ENCODE measurements at regions of chr10 and their contacts with region 1.

Region 1: GRCh38 chr10:80094231-80094630 is 15.8 kb downstream of the TMEM254 start:
- DNase-seq: no peak
- ATAC-seq: no peak
- H3K4me3 ChIP-seq: no peak overlapping the region
- H3K27ac ChIP-seq: no peak overlapping the region
- H3K4me1 ChIP-seq: no peaks in the 10 kb centered on the region
- H3K27me3 ChIP-seq: no peaks in the 10 kb centered on the region
- CTCF ChIP-seq: no peak

Region 2: GRCh38 chr10:78852466-78853240 is 1241.6 kb before region 1 on chr10:
- CTCF ChIA-PET with region 1: no interaction called
- POLR2A ChIA-PET with region 1: interaction called, 15 read pairs
- intact Hi-C with region 1: no loop called
- DNase-seq: peak; percentile 75
- ATAC-seq: peak; percentile 61
- H3K4me3 ChIP-seq: no peak overlapping the region
- H3K27ac ChIP-seq: no peak overlapping the region
- H3K4me1 ChIP-seq: no peaks in the 10 kb centered on the region
- H3K27me3 ChIP-seq: peaks cover 5% of the 10 kb centered on the region; the same call in 1 of the 2 replicates
- CTCF ChIP-seq: peak; percentile 94

Measured in PC-3 (cell line).